ENCODE measurements at regions of chr10 and their contacts with region 1.

Region 1: DNA sequence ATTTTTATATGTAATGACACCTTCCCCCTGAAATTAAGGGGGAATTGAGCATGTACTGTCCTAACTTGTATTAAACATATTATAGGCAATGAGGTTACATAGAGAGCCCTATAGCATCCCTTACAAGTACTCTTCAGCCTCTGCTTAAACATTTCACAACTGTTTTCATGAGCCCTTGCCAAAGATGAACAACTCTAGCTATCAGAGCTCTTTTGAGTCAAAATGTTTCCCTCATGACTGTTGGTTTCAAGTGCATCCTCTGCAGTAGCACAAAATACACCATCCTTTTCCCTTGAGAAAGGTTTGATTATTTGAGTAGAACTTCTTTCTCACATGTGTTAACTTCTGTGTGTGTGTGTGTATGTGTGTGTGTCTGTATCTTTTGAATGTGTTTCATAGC is 1157.6 kb upstream of the CELF2 start:
- DNase-seq: no peak
- ATAC-seq: no peak
- H3K4me3 ChIP-seq: no peak overlapping the region
- H3K27ac ChIP-seq: no peak overlapping the region
- H3K4me1 ChIP-seq: no peaks in the 10 kb centered on the region; a peak in 2 of 5 replicates
- H3K27me3 ChIP-seq: no peaks in the 10 kb centered on the region
- CTCF ChIP-seq: no peak
- EP300 ChIP-seq: no peak
- POLR2A ChIP-seq: no peak
- RAD21 ChIP-seq: no peak

Region 2: GRCh38 chr10:9342885-9343570 is 517.0 kb before region 1 on chr10:
- CTCF ChIA-PET with region 1: no interaction called
- POLR2A ChIA-PET with region 1: no interaction called
- in situ Hi-C with region 1: no loop called
- intact Hi-C with region 1: loop called (anchors 5 kb)
- DNase-seq: peak in 2 of 4 experiments; percentile 13 to 28
- ATAC-seq: no peak
- H3K4me3 ChIP-seq: no peak overlapping the region
- H3K27ac ChIP-seq: no peak overlapping the region
- H3K4me1 ChIP-seq: no peaks in the 10 kb centered on the region
- H3K27me3 ChIP-seq: no peaks in the 10 kb centered on the region
- CTCF ChIP-seq: peak in 2 of 3 experiments; percentile 46 to 55; a peak in 3 of 6 replicates
- EP300 ChIP-seq: no peak
- POLR2A ChIP-seq: no peak
- RAD21 ChIP-seq: peak; percentile 67 to 86

Measured in K562 (cell line).